Naive thymus-derived CD4-positive, alpha-beta T cell (primary cell): ENCODE measurements at regions of chr22 and their contacts with region 1.

Region 1: GRCh38 chr22:25172153-25172552 is 27.5 kb upstream of the CRYBB3 start:
- DNase-seq: peak in 7 of 9 donors; percentile 8 to 40 (median 23)
- ATAC-seq: peak; percentile 58
- H3K4me3 ChIP-seq: no peak overlapping the region
- H3K4me3 Mint-ChIP-seq: no peak overlapping the region
- H3K27ac ChIP-seq: no peak overlapping the region
- H3K27ac Mint-ChIP-seq: peak overlapping the region in 1 of 9 donors; percentile 51
- H3K4me1 ChIP-seq: no peaks in the 10 kb centered on the region
- H3K4me1 Mint-ChIP-seq: no peaks in the 10 kb centered on the region
- H3K27me3 ChIP-seq: no peaks in the 10 kb centered on the region
- H3K27me3 Mint-ChIP-seq: no peaks in the 10 kb centered on the region

Region 2: DNA sequence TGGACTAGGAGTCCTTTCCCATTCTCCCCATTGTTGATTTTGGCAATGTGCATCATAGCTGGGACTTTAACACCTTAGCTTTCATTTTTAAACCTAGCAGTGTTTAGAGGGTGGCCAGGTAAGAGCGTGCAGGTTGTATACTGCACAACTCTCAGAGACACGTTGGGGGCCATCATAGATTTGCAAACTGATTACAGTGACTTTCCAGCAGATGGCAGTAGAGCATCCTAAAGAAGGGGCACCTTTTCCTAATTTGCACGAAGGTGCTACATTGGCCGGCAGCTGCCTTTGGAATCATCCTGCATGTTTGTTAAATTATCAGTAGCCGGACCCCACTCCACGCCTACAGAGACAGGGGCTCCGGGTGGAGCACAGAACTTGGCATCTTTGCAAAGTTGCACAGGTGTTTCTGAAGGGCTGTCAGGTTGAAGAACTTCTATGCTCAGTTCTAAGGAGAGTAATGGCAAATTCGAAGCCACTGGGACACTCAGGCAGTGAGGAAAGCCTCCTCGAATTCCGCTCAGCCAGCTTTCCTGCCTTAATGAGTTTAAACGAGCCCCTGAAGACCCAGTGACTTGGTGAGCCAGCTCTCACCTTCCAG is 233.3 kb before region 1 on chr22:
- CTCF ChIA-PET with region 1: no interaction called
- POLR2A ChIA-PET with region 1: no interaction called
- intact Hi-C with region 1: loop called in 1 of 2 experiments (anchors 5 kb)
- DNase-seq: peak in 6 of 9 donors; percentile 25 to 48 (median 34)
- ATAC-seq: peak; percentile 73
- H3K4me3 ChIP-seq: no peak overlapping the region
- H3K4me3 Mint-ChIP-seq: no peak overlapping the region
- H3K27ac ChIP-seq: no peak overlapping the region
- H3K27ac Mint-ChIP-seq: no peak overlapping the region
- H3K4me1 ChIP-seq: no peaks in the 10 kb centered on the region
- H3K4me1 Mint-ChIP-seq: no peaks in the 10 kb centered on the region
- H3K27me3 ChIP-seq: peaks cover 0 to 4% of the 10 kb centered on the region in 2 donors
- H3K27me3 Mint-ChIP-seq: peaks cover 0 to 15% (median 4%) of the 10 kb centered on the region in 5 donors

Region 3: GRCh38 chr22:25346859-25347751 is 175.0 kb after region 1 on chr22:
- CTCF ChIA-PET with region 1: no interaction called
- POLR2A ChIA-PET with region 1: no interaction called
- intact Hi-C with region 1: no loop called
- DNase-seq: no peak
- ATAC-seq: no peak
- H3K4me3 ChIP-seq: no peak overlapping the region
- H3K4me3 Mint-ChIP-seq: no peak overlapping the region
- H3K27ac ChIP-seq: no peak overlapping the region
- H3K27ac Mint-ChIP-seq: no peak overlapping the region
- H3K4me1 ChIP-seq: no peaks in the 10 kb centered on the region
- H3K4me1 Mint-ChIP-seq: peaks cover 0 to 2% (median 0%) of the 10 kb centered on the region in 7 donors
- H3K27me3 ChIP-seq: no peaks in the 10 kb centered on the region
- H3K27me3 Mint-ChIP-seq: no peaks in the 10 kb centered on the region